AG04450 (cell line): ENCODE measurements at regions of chr2 and their contacts with region 1.

Region 1: GRCh38 chr2:205925373-205926337 is 160.3 kb downstream of the INO80D start:
- DNase-seq: no peak
- H3K4me3 ChIP-seq: peak overlapping the region; percentile 50
- H3K27ac ChIP-seq: no peak overlapping the region
- H3K27me3 ChIP-seq: peaks cover 29% of the 10 kb centered on the region
- CTCF ChIP-seq: peak; percentile 95

Region 2: DNA sequence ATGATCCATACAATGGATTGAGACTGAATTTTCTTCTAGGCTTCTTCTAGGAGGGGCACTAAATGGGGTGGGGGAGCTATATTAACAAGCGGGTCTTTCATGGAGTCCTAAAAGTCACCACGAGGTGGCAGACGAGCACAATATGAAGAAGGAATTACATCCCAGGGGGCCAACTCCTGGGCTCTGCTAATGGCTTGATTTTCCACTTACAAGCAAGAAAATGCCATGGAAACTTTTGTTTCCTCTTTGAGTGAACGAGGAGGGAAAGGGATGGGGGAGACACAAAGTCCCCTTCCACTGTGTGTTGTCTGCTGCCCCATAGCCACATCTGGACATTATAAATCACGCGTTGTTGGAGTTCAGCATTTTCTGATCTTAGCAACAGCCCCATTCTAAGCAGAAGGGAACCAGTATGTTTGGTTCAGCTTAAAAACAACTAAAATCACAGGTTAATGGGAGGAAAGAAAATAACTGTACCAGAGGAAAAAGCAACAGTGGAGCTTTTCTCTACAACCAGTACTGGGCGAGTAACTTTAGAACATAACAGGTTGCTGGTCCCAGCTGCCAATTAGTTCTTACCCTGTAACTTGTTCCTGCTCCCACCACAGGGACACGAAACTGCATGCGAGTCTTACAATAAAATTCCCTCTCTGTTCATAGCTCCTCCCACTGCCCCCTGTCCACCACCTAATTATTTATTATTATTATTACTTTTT is 1665.3 kb before region 1 on chr2:
- CTCF ChIA-PET with region 1: interaction called, 34 read pairs
- POLR2A ChIA-PET with region 1: no interaction called
- DNase-seq: peak; percentile 49
- H3K4me3 ChIP-seq: no peak overlapping the region
- H3K27ac ChIP-seq: no peak overlapping the region
- H3K27me3 ChIP-seq: peaks cover 2% of the 10 kb centered on the region
- CTCF ChIP-seq: peak; percentile 86

Region 3: GRCh38 chr2:205130111-205130829 is 795.4 kb before region 1 on chr2:
- CTCF ChIA-PET with region 1: interaction called, 10 read pairs
- POLR2A ChIA-PET with region 1: no interaction called
- DNase-seq: no peak
- H3K4me3 ChIP-seq: no peak overlapping the region
- H3K27ac ChIP-seq: no peak overlapping the region
- H3K27me3 ChIP-seq: no peaks in the 10 kb centered on the region
- CTCF ChIP-seq: no peak

Region 4: GRCh38 chr2:205758051-205758450 is 167.6 kb before region 1 on chr2:
- CTCF ChIA-PET with region 1: interaction called, 11 read pairs
- POLR2A ChIA-PET with region 1: no interaction called
- DNase-seq: peak; percentile 84
- H3K4me3 ChIP-seq: no peak overlapping the region
- H3K27ac ChIP-seq: peak overlapping the region; percentile 50
- H3K27me3 ChIP-seq: no peaks in the 10 kb centered on the region
- CTCF ChIP-seq: no peak

Region 5: GRCh38 chr2:205776139-205776538 is 149.5 kb before region 1 on chr2:
- CTCF ChIA-PET with region 1: interaction called, 26 read pairs
- POLR2A ChIA-PET with region 1: no interaction called
- DNase-seq: no peak
- H3K4me3 ChIP-seq: no peak overlapping the region
- H3K27ac ChIP-seq: no peak overlapping the region
- H3K27me3 ChIP-seq: no peaks in the 10 kb centered on the region
- CTCF ChIP-seq: peak; percentile 51

Region 6: DNA sequence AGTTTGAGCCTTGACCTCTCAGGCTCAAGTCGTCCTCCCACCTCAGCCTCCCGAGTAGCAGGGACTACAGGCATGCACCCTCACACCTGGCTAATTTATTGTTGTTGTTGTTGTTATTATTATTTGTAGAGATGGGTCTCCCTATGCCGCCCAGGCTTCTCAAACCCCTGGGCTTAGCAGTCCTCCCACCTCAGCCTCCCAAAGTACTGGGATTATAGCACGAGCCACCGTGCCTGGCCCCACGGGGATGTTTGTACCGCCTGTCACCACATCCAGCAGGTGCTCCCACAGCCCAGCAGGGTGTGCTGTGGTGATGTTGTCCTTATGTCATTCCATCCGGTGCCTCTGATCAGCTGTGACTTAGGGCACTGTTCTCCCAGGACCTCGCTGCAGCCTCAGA is 22.0 kb before region 1 on chr2:
- CTCF ChIA-PET with region 1: interaction called, 18 read pairs
- POLR2A ChIA-PET with region 1: no interaction called
- DNase-seq: no peak
- H3K4me3 ChIP-seq: no peak overlapping the region
- H3K27ac ChIP-seq: no peak overlapping the region
- H3K27me3 ChIP-seq: peaks cover 10% of the 10 kb centered on the region
- CTCF ChIP-seq: peak; percentile 10; the same call in 1 of the 2 replicates

Region 7: DNA sequence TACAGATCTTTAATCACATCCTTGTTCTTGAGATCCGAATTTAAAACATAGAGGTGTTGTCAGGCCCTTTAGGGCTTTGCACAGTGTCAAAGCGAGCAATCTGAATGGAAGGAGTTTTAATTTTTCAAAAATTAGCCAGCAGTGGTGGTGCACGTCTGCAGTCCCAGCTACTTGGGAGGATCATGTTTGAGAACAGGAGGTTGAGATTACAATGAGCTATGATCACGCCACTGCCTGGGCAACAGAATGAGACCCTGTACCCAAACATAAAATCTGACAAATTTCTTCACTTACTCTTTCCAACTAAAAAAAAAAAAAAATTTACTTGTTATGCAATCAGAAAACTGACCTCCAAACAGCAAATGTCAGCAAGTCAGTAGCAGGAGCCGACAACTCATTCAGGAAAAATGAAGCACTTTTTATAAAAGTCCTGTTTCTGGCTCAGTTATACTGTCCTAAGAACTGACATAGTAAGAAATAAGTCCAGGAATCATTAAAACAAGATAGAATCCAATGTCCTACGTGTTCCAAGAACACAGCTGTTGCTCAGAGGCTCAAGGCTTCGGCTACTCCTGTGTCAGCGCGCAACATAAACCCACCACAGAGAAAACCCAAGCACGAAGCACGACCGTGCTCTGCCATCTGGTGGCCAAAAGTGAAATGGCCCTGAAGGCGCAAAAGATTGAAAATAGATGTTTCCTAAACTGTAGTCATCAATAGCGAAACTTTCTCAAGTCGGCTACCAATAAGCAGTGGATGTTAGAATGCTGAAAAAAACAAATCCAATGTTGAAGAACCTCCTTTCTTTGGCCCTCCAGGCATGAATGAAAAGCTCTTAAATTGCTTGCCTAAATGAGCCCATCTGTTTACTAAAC is 22.2 kb after region 1 on chr2:
- CTCF ChIA-PET with region 1: interaction called, 23 read pairs
- POLR2A ChIA-PET with region 1: no interaction called
- DNase-seq: peak; percentile 65
- H3K4me3 ChIP-seq: 0 out of 2 replicates have a peak overlapping the region, but pooled peaks have one; percentile 13
- H3K27ac ChIP-seq: peak overlapping the region; percentile 21
- H3K27me3 ChIP-seq: peaks cover 9% of the 10 kb centered on the region
- CTCF ChIP-seq: peak; percentile 96